ENCODE measurements at regions of chr20 and their contacts with region 1.

Region 1: GRCh38 chr20:34876162-34877001 is at the start of gene ACSS2:
- DNase-seq: peak; percentile 99
- H3K4me3 Mint-ChIP-seq: peak within 1 kb of the TSS; percentile 84
- H3K27ac Mint-ChIP-seq: peak within 1 kb of the TSS; percentile 80
- H3K4me1 Mint-ChIP-seq: peaks cover 51% of the 10 kb centered on the region
- H3K27me3 Mint-ChIP-seq: no peaks in the 10 kb centered on the region
- total RNA-seq, gene ACSS2: 45.6 to 47.7 TPM

Region 2: GRCh38 chr20:34736106-34736735 is 140.2 kb before region 1 on chr20:
- CTCF ChIA-PET with region 1: no interaction called
- POLR2A ChIA-PET with region 1: no interaction called
- intact Hi-C with region 1: no loop called
- DNase-seq: no peak
- H3K4me3 Mint-ChIP-seq: no peak overlapping the region
- H3K27ac Mint-ChIP-seq: no peak overlapping the region
- H3K4me1 Mint-ChIP-seq: no peaks in the 10 kb centered on the region
- H3K27me3 Mint-ChIP-seq: no peaks in the 10 kb centered on the region

Region 3: DNA sequence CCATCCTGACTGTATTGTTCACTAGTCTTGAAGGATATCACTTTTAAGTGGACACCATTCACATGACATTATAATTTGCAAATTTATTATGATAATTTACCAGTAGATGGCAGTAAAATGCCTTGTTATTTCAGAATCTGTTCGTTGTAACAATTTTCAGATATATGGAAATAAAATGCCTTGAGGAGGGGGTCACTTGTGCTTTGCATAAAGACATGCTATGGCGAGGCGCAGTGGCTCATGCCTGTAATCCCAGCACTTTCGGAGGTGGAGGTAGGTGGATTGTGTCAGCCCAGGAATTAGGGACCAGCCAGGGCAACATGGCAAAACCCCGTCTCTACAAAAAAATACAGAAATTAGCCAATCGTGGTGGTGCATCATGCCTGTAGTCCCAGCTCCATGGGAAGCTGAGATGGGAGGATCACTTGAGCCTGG is 41.9 kb before region 1 on chr20:
- CTCF ChIA-PET with region 1: interaction called, 4 read pairs
- POLR2A ChIA-PET with region 1: no interaction called
- intact Hi-C with region 1: loop called (anchors 2 kb)
- DNase-seq: no peak
- H3K4me3 Mint-ChIP-seq: no peak overlapping the region
- H3K27ac Mint-ChIP-seq: peak overlapping the region; percentile 42
- H3K4me1 Mint-ChIP-seq: no peaks in the 10 kb centered on the region
- H3K27me3 Mint-ChIP-seq: peaks cover 10% of the 10 kb centered on the region

Region 4: DNA sequence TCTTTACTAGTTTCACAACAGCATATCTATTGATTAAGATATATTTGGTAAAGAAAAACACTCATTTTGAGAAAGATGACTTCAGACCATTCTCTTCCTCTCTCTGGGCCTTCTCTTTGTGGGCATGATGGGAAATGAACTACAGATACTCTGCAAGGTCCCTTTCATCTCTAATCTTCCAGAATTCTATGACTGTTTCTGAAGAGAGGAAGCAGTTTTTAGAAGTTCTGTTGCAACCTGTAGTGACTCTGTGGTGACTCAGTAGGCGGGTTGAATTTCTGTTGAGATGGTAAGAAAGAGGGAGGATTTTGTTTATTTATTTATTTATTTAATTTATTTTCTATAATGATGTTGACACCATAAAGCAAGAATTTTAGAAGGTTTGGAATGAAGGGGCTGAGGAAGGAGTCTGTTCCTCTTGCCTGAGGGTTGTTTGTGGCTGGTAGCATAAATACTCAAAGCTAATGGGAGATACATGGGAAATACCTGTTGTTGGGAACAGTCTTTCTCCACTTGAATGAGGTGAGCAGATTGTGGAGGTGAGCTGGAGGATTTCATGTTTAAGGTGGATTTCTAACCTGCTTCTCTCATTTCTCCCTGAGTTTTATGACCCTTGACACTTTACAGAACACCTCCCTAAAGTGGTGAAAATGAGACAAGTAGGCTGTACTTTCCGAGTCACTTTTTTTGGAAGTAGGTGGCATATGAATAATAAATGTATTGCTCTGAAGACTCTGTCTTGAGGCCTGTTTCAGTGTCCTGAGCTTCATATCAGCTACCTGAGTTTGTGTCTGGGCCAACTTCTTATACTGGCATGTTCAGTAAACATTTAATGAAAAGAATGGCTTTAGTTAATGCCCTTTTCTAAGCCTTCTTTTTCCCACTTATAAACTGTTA is 15.0 kb after region 1 on chr20:
- CTCF ChIA-PET with region 1: interaction called, 23 read pairs
- POLR2A ChIA-PET with region 1: interaction called, 3 read pairs
- intact Hi-C with region 1: loop called (anchors 1 kb)
- DNase-seq: peak; percentile 60
- H3K4me3 Mint-ChIP-seq: peak overlapping the region; percentile 10
- H3K27ac Mint-ChIP-seq: peak overlapping the region; percentile 80
- H3K4me1 Mint-ChIP-seq: peaks cover 40% of the 10 kb centered on the region
- H3K27me3 Mint-ChIP-seq: no peaks in the 10 kb centered on the region

Region 5: GRCh38 chr20:34955232-34956040 is 79.1 kb after region 1 on chr20 and contains the starts of genes GSS and MYH7B:
- CTCF ChIA-PET with region 1: interaction called, 139 read pairs
- POLR2A ChIA-PET with region 1: interaction called, 16 read pairs
- intact Hi-C with region 1: loop called (anchors 1 kb)
- DNase-seq: peak; percentile 99
- H3K4me3 Mint-ChIP-seq: peak within 1 kb of the TSS; percentile 92
- H3K27ac Mint-ChIP-seq: peak within 1 kb of the TSS; percentile 89
- H3K4me1 Mint-ChIP-seq: peaks cover 24% of the 10 kb centered on the region
- H3K27me3 Mint-ChIP-seq: no peaks in the 10 kb centered on the region
- total RNA-seq, gene GSS: 67.7 to 72.2 TPM
- total RNA-seq, gene MYH7B: 0.50 to 0.61 TPM

Region 6: GRCh38 chr20:35001596-35002362 is 125.4 kb after region 1 on chr20:
- CTCF ChIA-PET with region 1: interaction called, 21 read pairs
- POLR2A ChIA-PET with region 1: no interaction called
- intact Hi-C with region 1: no loop called
- DNase-seq: no peak
- H3K4me3 Mint-ChIP-seq: no peak overlapping the region
- H3K27ac Mint-ChIP-seq: no peak overlapping the region
- H3K4me1 Mint-ChIP-seq: peaks cover 3% of the 10 kb centered on the region
- H3K27me3 Mint-ChIP-seq: no peaks in the 10 kb centered on the region

Measured in activated CD4-positive, alpha-beta memory T cell treated with anti-CD3 and anti-CD28 coated beads for 36 hours (primary cell).